Right ventricle myocardium superior (tissue), 1 donor: ENCODE measurements at regions of chr11 and their contacts with region 1.

Region 1: GRCh38 chr11:67082035-67082791 is 25.6 kb downstream of the RHOD start:
- DNase-seq: peak; percentile 45
- ATAC-seq: peak; percentile 62

Region 2: GRCh38 chr11:67010323-67010905 is 71.8 kb before region 1 on chr11:
- intact Hi-C with region 1: no loop called
- DNase-seq: no peak
- ATAC-seq: no peak

Region 3: DNA sequence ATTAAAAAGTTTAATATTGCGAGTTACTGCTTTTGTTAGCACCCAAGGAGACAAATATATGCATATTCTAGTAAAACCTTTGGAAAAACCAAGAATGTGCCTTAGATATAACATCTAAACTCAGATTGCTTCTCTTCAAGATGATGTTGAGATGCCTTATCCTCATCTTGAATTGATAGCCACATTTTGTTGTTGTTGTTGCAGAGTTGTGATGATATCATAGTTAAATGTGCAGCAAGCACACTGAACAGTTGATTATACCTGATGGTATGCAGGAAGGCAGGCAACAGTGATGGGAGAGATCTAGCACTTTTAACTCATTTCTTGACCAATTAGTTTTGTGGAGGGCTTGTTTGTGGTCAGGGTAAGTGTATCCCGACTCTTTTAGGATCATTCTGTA is 84.9 kb after region 1 on chr11:
- intact Hi-C with region 1: loop called (anchors 5 kb)
- DNase-seq: no peak
- ATAC-seq: no peak